Activated T-helper 1 cell treated with anti-CD3 and anti-CD28 coated beads, Interleukin-12 subunit alpha, Interleukin-12 subunit beta, Interleukin-2, Interleukin-4 antibody, amounts not matched to agents 30 ng/mL and 10 ng/mL and 1 ng/mL, durations not matched to agents 14 hours and 24 hours and 36 hours (primary cell): ENCODE measurements at regions of chr1 and their contacts with region 1.

Region 1: DNA sequence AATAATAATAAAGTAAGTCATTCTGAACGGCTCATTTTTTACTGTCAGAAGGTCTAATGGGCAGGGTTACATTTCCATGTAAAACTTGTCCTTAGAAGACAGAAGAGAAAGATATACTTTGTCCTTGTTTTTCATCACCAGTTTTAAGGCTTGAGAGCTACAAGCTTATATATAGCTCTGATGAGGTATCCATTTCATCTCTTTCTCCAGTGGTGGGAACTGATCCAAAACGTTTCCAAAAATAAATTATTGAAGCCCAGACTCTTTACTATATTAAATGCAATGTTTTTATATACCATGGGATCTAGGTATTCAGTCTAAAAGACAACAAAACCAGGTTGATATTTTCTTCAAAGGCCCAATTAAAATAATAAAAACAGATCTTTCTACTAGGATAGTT is 8.7 kb downstream of the B3GALNT2 start:
- DNase-seq: no peak
- H3K4me3 Mint-ChIP-seq: no peak overlapping the region
- H3K27ac Mint-ChIP-seq: no peak overlapping the region
- H3K4me1 Mint-ChIP-seq: peaks cover 30% of the 10 kb centered on the region
- H3K27me3 Mint-ChIP-seq: no peaks in the 10 kb centered on the region

Region 2: GRCh38 chr1:234621657-234622335 is 873.8 kb before region 1 on chr1:
- intact Hi-C with region 1: no loop called
- DNase-seq: no peak
- H3K4me3 Mint-ChIP-seq: no peak overlapping the region
- H3K27ac Mint-ChIP-seq: no peak overlapping the region
- H3K4me1 Mint-ChIP-seq: peaks cover 14% of the 10 kb centered on the region
- H3K27me3 Mint-ChIP-seq: no peaks in the 10 kb centered on the region

Region 3: DNA sequence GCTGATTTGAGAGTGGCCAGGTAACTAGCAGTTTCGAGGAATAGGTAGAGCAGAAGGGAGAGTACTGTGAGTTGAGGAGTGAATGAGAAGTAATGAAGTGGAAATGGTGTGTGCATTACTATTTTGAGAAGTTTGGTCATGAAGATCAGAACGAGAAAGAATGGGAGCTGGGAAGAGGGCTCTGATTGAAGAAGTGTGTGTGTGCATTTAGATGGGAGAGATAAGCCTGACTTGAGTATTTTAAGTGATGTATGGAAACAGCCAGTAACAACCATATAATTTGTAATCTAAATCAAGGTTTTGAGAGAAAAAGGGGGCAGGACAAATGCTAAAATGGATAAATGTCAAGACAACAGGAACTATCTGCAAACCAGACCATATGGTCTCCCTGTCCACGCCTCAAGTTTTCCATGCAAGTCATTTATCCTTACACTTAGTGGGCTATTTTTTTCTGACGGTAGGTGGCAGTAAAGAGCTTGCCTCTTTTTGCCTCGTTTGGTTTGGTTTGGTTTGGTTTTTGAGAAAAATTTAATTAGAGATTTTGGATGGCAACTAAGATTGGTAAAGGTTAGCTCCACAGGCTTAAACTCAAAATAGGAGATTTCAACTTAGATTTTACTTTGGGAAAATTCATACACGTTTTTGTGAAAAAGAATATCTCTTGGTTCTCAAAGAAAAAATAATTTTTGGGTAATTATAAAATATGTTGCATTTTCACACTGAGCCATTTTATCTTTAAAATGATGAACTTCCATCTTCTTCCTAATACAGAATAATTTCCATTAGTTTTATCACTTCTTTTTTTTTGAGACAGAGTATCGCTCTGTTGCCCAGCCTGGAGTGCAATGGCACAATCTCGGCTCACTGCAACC is 18.2 kb after region 1 on chr1:
- intact Hi-C with region 1: no loop called
- DNase-seq: no peak
- H3K4me3 Mint-ChIP-seq: no peak overlapping the region
- H3K27ac Mint-ChIP-seq: no peak overlapping the region
- H3K4me1 Mint-ChIP-seq: peaks cover 12% of the 10 kb centered on the region
- H3K27me3 Mint-ChIP-seq: peaks cover 22% of the 10 kb centered on the region

Region 4: DNA sequence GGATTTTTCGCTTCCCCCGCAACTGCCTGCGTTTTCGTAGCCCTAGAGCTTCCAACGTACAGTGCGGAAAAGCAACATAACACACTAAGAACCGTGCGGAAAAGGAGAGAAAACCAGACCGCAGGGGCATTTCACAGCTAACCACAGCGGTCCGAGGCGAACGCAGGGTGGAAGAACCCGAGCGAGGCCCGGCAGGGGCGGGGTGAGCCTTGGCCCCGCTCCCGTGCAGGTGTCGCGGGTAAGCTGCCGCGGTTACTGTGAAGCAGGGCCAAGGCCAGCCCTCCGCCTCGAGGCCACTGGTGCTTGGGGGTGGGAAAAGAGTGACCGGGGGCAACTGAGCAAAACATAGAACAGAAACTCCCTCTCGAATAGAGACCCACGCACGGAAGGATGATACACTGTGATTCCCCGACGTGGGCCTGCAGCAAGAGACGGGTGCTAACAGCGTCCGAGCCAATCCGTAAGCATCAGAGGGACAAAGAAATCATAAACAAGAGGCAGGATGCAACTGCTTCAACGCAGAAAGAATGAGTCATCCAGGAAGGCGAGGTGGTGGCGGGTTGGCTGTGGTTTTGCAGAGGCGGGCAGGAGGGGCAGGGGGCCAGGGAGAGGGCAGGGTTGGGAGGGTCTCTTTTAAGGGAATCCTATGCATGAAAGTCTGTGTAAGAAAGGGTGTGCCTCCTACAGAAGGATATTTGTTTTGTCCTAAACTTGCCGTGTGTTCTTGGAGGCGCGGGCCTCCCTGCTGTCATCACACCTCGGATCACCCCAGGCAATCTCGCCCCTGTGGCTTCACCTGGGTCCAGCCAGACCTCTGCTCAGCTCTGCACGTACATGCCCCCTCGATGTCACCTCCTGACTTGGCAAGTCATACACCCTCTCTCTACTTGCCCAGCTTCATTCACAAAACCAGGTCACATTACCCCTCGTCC is 146.7 kb after region 1 on chr1:
- intact Hi-C with region 1: loop called (anchors 1 kb)
- DNase-seq: peak; percentile 76
- H3K4me3 Mint-ChIP-seq: peak overlapping the region; percentile 67
- H3K27ac Mint-ChIP-seq: peak overlapping the region; percentile 92
- H3K4me1 Mint-ChIP-seq: peaks cover 71% of the 10 kb centered on the region
- H3K27me3 Mint-ChIP-seq: peaks cover 17% of the 10 kb centered on the region

Region 5: GRCh38 chr1:235990376-235991085 is 495.0 kb after region 1 on chr1:
- intact Hi-C with region 1: no loop called
- DNase-seq: no peak
- H3K4me3 Mint-ChIP-seq: no peak overlapping the region
- H3K27ac Mint-ChIP-seq: no peak overlapping the region
- H3K4me1 Mint-ChIP-seq: peaks cover 3% of the 10 kb centered on the region
- H3K27me3 Mint-ChIP-seq: peaks cover 25% of the 10 kb centered on the region

Region 6: DNA sequence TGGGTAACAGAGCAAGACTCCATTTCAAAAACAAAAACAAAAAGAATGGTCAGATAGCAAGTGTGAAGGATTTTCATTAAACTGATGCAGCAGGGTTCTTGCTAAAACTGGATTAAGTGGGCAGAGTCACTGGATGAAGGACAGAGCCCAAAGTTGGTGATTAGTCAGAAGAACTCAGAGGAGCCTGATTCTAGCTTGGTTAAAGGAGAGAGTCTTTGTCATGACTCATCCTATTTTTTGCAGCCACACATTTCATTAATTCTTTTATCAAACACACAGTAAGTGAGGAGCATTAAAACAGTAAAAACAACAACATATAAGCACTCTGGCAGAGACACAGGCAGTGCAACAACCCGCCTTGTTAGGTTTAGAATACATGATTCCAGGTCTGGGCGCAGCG is 842.5 kb after region 1 on chr1:
- intact Hi-C with region 1: no loop called
- DNase-seq: no peak
- H3K4me3 Mint-ChIP-seq: no peak overlapping the region
- H3K27ac Mint-ChIP-seq: no peak overlapping the region
- H3K4me1 Mint-ChIP-seq: no peaks in the 10 kb centered on the region
- H3K27me3 Mint-ChIP-seq: peaks cover 3% of the 10 kb centered on the region